Endothelial cell of umbilical vein (primary cell): ENCODE measurements at regions of chr17 and their contacts with region 1.

Region 1: DNA sequence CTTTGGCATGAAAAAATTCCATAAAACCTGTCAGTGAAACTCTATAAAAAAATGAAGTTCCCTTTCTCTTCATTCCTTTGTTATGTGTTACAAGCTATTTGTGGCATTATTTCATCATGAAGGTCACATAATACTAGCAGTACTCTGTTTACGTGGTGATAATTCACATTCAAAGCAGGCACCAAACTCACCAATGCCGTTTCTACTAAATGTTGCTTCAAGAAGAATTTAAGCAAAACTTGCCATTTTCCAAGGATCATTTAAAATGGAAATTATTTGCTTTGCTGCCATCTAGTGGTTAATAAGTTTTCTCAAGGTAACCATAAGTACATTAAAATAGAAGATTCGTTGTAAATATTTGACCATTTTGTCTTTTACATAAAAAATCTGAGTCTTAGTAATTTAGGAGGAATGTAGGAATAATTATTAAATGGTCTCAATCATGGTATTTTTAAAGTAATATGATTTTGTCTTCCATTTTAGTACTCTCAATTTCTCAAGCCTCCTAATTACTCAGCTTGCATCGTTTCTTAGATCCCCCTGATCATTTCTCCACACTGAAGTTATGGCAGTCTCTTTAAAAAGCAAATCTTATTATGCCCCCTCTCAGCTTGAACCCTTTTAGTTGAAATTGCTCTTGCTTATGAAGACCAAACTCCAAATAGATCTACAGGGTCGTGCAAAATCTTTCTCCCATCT is 80.8 kb downstream of the OMG start:
- DNase-seq: peak; percentile 68
- H3K4me3 ChIP-seq: no peak overlapping the region
- H3K27ac ChIP-seq: no peak overlapping the region
- H3K4me1 ChIP-seq: no peaks in the 10 kb centered on the region
- H3K27me3 ChIP-seq: no peaks in the 10 kb centered on the region
- CTCF ChIP-seq: peak in 1 of 2 donors; percentile 31
- POLR2A ChIP-seq: no peak

Region 2: DNA sequence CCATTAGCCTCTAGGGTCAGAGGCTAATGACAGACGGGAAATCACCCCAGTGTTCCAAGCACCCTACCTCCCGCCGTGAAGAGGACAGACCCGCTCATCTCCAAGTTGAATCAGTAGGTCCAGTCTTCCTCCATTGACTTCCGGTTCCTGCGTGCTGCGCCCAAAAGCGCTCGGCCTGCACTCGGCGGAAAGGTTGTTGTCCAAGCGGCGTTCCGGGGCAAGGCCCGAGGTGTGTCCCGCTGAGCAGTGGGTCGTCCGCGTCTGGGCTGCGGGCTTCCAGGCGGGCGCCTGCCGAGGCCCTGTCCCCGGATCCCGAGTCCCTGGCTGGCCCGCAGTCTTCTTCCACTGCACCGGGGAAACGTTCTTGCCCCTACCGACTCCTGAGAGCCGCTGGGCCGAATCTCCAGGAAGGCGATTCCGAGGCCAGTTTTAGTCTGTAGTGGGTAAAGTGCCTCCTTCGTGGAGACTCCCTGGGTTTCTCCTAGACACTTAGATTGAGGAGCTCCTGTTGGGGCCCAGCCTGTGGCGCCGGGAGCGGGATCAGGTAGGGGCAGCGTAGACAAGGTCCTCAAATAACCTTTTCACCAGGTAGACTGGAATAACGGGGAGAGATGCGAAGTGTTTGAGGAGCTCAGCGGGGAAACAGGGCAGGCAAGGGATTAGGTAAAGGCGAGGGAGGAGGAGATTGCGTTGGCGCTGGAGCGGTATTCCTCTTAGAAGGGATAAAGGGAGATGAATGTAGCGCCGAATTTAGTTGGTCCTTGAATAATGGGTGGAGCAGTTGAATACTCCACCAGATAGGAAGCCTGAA is 309.9 kb before region 1 on chr17 and contains the start of gene TEFM:
- CTCF ChIA-PET with region 1: no interaction called
- POLR2A ChIA-PET with region 1: no interaction called
- dilution Hi-C with region 1: no loop called
- intact Hi-C with region 1: loop called (anchors 1 kb)
- DNase-seq: peak; percentile 92
- H3K4me3 ChIP-seq: peak within 1 kb of the TSS; percentile 22 to 85 (median 65)
- H3K27ac ChIP-seq: peak within 1 kb of the TSS; percentile 68
- H3K4me1 ChIP-seq: peaks cover 6% of the 10 kb centered on the region
- H3K27me3 ChIP-seq: no peaks in the 10 kb centered on the region
- CTCF ChIP-seq: no peak
- POLR2A ChIP-seq: peak; percentile 84
- total RNA-seq, gene TEFM: 12.0 and 12.7 TPM in 2 replicates

Region 3: GRCh38 chr17:31008374-31009041 is 207.7 kb before region 1 on chr17:
- CTCF ChIA-PET with region 1: interaction called, 41 read pairs
- POLR2A ChIA-PET with region 1: no interaction called
- dilution Hi-C with region 1: no loop called
- intact Hi-C with region 1: loop called (anchors 1 kb)
- DNase-seq: peak; percentile 61
- H3K4me3 ChIP-seq: peak overlapping the region; percentile 22 to 58 (median 45)
- H3K27ac ChIP-seq: no peak overlapping the region
- H3K4me1 ChIP-seq: peaks cover 15% of the 10 kb centered on the region
- H3K27me3 ChIP-seq: no peaks in the 10 kb centered on the region
- CTCF ChIP-seq: no peak
- POLR2A ChIP-seq: no peak

Region 4: GRCh38 chr17:31015639-31016038 is 200.6 kb before region 1 on chr17:
- CTCF ChIA-PET with region 1: interaction called, 41 read pairs
- POLR2A ChIA-PET with region 1: no interaction called
- dilution Hi-C with region 1: no loop called
- intact Hi-C with region 1: loop called (anchors 1 kb)
- DNase-seq: no peak
- H3K4me3 ChIP-seq: no peak overlapping the region
- H3K27ac ChIP-seq: no peak overlapping the region
- H3K4me1 ChIP-seq: peaks cover 9% of the 10 kb centered on the region
- H3K27me3 ChIP-seq: no peaks in the 10 kb centered on the region
- CTCF ChIP-seq: no peak
- POLR2A ChIP-seq: no peak

Region 5: GRCh38 chr17:31275116-31275515 is 58.9 kb after region 1 on chr17:
- CTCF ChIA-PET with region 1: no interaction called
- POLR2A ChIA-PET with region 1: no interaction called
- dilution Hi-C with region 1: no loop called
- intact Hi-C with region 1: no loop called
- DNase-seq: no peak
- H3K4me3 ChIP-seq: no peak overlapping the region
- H3K27ac ChIP-seq: no peak overlapping the region
- H3K4me1 ChIP-seq: peaks cover 9% of the 10 kb centered on the region
- H3K27me3 ChIP-seq: no peaks in the 10 kb centered on the region
- CTCF ChIP-seq: no peak
- POLR2A ChIP-seq: no peak

Region 6: GRCh38 chr17:31475378-31476162 is 259.4 kb after region 1 on chr17:
- CTCF ChIA-PET with region 1: no interaction called
- POLR2A ChIA-PET with region 1: no interaction called
- dilution Hi-C with region 1: no loop called
- intact Hi-C with region 1: no loop called
- DNase-seq: no peak
- H3K4me3 ChIP-seq: no peak overlapping the region
- H3K27ac ChIP-seq: no peak overlapping the region
- H3K4me1 ChIP-seq: no peaks in the 10 kb centered on the region
- H3K27me3 ChIP-seq: peaks cover 3 to 7% of the 10 kb centered on the region in 2 experiments
- CTCF ChIP-seq: no peak
- POLR2A ChIP-seq: no peak